ENCODE measurements at regions of chr17 and their contacts with region 1.

Region 1: GRCh38 chr17:81148986-81149533 is 16.2 kb upstream of the PVALEF start:
- DNase-seq: no peak
- ATAC-seq: peak; percentile 22

Region 2: GRCh38 chr17:81189670-81190530 is 40.8 kb after region 1 on chr17:
- intact Hi-C with region 1: loop called (anchors 5 kb)
- DNase-seq: no peak
- ATAC-seq: no peak

Region 3: DNA sequence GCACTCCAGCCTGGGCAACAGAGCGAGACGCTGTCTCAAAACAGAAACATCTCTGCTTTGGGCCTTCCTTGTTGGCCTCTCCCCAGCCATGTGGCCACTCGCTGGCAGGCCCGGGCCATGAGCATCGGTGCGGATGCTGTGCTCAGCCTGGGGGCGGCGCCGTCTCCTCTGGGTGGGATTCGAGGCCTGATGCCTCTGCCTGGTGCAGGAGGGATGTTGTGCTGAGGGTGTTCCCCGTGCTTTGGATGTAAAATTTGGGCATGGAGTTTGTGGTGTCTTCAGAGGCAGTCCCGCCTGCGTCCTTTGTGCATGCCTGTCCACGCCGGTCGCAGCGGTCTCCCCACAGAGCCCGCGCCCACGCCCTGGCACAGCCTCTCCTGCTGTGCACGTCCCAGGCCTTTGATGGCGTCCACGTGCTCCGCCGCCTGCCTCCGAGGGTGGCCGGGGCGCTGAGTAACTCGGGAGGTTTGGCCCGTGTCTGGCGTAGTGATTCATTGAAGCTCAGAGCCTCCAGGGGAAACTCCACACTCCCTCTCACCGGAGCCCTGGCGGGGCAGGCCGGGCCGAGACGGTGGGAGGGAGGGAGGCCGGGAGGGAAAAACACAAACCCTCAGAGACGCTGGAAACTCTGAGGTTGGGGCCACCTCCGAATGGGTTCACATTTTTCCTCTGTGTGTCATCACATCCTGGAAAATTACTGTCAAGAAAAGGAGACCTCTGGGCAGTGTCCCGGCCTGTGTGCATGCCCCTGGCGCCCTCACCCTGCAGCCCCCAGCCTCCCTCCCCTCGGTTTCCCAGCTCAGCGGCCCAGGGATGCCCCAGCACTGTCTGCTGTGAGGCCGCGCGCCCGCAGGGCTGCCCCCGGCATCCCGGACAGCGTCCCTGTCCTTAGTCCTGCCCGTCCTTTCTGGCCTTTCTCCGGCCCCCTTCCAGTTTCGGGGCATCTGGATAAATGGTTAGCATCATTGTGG is 854.6 kb after region 1 on chr17:
- intact Hi-C with region 1: no loop called
- DNase-seq: peak; percentile 67
- ATAC-seq: peak; percentile 14

Measured in Right ventricle myocardium superior (tissue), 1 donor.